Caco-2 (cell line): ENCODE measurements at regions of chr21 and their contacts with region 1.

Region 1: GRCh38 chr21:42009831-42010523 is at the start of gene ZBTB21:
- DNase-seq: peak; percentile 98 to 99
- H3K4me3 ChIP-seq: peak within 1 kb of the TSS; percentile 80
- H3K4me3 Mint-ChIP-seq: peak within 1 kb of the TSS; percentile 85
- H3K27ac Mint-ChIP-seq: peak within 1 kb of the TSS; percentile 98
- H3K4me1 ChIP-seq: peaks cover 4% of the 10 kb centered on the region; the same call in 1 of the 2 replicates
- H3K4me1 Mint-ChIP-seq: peaks cover 19% of the 10 kb centered on the region
- H3K27me3 ChIP-seq: no peaks in the 10 kb centered on the region
- H3K27me3 Mint-ChIP-seq: no peaks in the 10 kb centered on the region
- CTCF ChIP-seq: no peak
- total RNA-seq, gene ZBTB21: 21.4 and 23.3 TPM in 2 replicates

Region 2: GRCh38 chr21:41816220-41817165 is 193.5 kb before region 1 on chr21:
- CTCF ChIA-PET with region 1: no interaction called
- POLR2A ChIA-PET with region 1: interaction called, 19 read pairs
- intact Hi-C with region 1: no loop called
- DNase-seq: peak; percentile 51 to 64
- H3K4me3 ChIP-seq: no peak overlapping the region
- H3K4me3 Mint-ChIP-seq: no peak overlapping the region
- H3K27ac Mint-ChIP-seq: peak overlapping the region; percentile 42
- H3K4me1 ChIP-seq: 0 out of 2 replicates have a peak, but pooled peaks cover 3% of the 10 kb centered on the region
- H3K4me1 Mint-ChIP-seq: no peaks in the 10 kb centered on the region
- H3K27me3 ChIP-seq: no peaks in the 10 kb centered on the region
- H3K27me3 Mint-ChIP-seq: no peaks in the 10 kb centered on the region
- CTCF ChIP-seq: peak; percentile 73

Region 3: GRCh38 chr21:41879190-41879998 is 130.6 kb before region 1 on chr21 and contains the start of gene PRDM15:
- CTCF ChIA-PET with region 1: no interaction called
- POLR2A ChIA-PET with region 1: no interaction called
- intact Hi-C with region 1: loop called (anchors 5 kb)
- DNase-seq: peak; percentile 86 to 87
- H3K4me3 ChIP-seq: peak within 1 kb of the TSS; percentile 84
- H3K4me3 Mint-ChIP-seq: peak within 1 kb of the TSS; percentile 83
- H3K27ac Mint-ChIP-seq: peak within 1 kb of the TSS; percentile 88
- H3K4me1 ChIP-seq: peaks cover 9% of the 10 kb centered on the region; the same call in 1 of the 2 replicates
- H3K4me1 Mint-ChIP-seq: no peaks in the 10 kb centered on the region
- H3K27me3 ChIP-seq: no peaks in the 10 kb centered on the region
- H3K27me3 Mint-ChIP-seq: no peaks in the 10 kb centered on the region
- CTCF ChIP-seq: no peak
- total RNA-seq, gene PRDM15: 5.6 and 8.2 TPM in 2 replicates

Region 4: DNA sequence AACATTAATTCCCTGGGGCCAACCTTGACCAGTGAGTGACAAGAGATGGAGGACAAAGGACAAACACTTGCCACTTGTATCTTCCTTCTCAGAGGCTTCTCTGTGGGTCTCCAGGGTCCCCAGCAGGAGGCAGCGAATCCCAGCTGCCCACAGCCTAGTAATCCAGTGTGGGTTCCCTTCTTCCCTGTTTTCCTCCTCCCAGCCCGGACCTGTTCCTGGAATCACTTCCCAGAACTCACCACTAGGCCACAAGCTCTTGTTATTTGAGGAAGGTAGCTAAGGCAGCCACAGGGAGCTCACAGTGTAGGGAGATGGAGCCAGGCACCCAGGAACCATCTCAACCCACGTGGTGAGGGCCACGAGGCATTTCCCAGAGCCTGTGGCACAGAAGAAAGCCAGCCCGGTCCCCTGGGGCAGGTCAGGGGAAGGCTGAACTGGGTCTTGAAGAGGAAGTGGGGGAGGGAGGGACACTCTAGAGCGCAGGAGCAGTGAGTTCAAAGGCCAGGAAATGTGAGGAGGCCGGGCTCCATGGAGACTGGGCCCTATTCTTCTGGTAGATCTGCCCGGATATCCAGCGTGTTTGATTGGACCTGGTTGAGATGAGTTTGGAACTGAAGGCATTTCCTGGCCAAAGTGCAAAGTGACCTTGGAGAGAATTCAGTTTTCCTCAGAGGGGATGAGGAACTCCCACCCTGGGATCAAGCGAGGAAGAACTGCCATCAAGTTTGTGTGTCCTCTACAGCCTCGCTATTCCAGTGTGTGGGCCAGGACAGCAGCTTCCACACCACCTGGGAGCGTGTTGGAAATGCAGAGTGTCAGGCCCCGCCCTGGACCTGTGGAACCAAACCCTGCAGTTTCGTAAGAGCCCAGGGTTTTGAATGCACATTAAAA is 35.9 kb before region 1 on chr21:
- CTCF ChIA-PET with region 1: no interaction called
- POLR2A ChIA-PET with region 1: no interaction called
- intact Hi-C with region 1: no loop called
- DNase-seq: no peak
- H3K4me3 ChIP-seq: no peak overlapping the region
- H3K4me3 Mint-ChIP-seq: no peak overlapping the region
- H3K27ac Mint-ChIP-seq: no peak overlapping the region
- H3K4me1 ChIP-seq: no peaks in the 10 kb centered on the region
- H3K4me1 Mint-ChIP-seq: no peaks in the 10 kb centered on the region
- H3K27me3 ChIP-seq: no peaks in the 10 kb centered on the region
- H3K27me3 Mint-ChIP-seq: no peaks in the 10 kb centered on the region
- CTCF ChIP-seq: no peak

Region 5: DNA sequence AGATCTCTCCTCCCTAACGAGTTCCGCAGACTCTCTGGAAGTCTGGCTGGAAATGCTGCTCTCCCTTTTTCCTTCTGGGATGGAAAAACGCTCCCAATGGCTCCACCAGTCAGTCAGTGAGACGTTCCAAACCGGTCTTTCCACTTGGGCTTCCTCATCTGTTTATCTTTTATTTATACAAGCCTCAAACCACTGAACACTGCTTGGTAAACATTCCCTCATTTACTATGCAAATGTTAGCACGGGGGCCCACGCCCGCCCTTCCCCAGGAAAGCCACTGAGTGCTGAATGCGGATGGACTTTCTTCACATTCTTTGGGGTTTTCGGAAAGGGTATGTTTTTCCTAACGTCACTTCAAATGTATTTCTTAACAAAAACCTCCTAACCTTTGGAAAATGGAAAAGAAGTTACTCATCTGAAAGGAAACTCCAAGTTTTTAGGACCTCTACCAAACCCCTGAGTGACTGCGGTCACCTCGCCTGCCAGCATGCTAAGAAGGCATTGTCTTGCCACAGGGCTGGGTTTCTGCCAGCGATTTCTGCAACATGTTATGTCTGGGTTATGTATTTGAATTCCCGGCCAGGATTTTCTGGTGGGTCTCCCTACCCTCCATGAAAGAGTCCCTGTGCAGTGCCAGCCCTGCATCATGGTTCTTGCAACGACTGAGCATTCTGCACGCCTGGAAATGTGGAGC is 47.2 kb after region 1 on chr21:
- CTCF ChIA-PET with region 1: interaction called, 3 read pairs
- POLR2A ChIA-PET with region 1: no interaction called
- intact Hi-C with region 1: loop called (anchors 2 kb)
- DNase-seq: peak; percentile 84 to 86
- H3K4me3 ChIP-seq: peak overlapping the region; percentile 30
- H3K4me3 Mint-ChIP-seq: peak overlapping the region; percentile 70
- H3K27ac Mint-ChIP-seq: peak overlapping the region; percentile 85
- H3K4me1 ChIP-seq: peaks cover 52% of the 10 kb centered on the region
- H3K4me1 Mint-ChIP-seq: peaks cover 27% of the 10 kb centered on the region
- H3K27me3 ChIP-seq: no peaks in the 10 kb centered on the region
- H3K27me3 Mint-ChIP-seq: no peaks in the 10 kb centered on the region
- CTCF ChIP-seq: no peak

Region 6: DNA sequence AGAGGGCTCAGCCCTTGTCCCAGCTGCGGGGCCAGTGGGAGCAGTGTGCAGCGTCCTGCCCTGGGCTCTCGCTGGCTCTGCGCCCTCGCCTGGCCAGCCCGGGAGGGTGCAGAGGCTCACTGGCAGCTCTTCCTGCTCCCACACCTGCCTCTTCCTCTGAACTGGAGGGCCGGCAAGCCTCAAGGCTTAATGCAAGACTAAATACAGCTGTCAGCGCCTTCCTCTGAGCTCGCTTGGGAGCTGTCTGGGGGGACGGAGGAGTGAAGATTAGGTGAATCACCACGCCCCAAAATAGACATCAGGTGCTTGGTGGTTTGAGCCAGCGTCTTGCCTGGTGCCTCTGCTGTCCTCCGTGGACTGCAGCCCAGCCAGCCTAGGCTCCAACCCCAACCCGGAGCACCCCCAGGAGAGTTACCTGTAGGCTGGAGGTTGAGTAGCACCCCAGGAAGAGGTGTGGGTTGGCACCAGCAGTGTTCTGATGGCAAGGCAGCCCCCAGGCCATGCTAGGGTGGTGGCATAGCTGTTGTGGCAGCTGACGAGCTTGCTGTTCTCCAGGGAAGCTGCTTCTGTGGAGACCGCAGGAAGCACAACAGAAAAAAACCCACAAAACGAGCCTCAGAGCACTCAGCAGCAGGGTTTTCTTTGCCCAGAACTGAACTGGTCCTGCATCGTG is 98.0 kb after region 1 on chr21:
- CTCF ChIA-PET with region 1: interaction called, 9 read pairs
- POLR2A ChIA-PET with region 1: no interaction called
- intact Hi-C with region 1: loop called (anchors 1 kb)
- DNase-seq: peak; percentile 74 to 77
- H3K4me3 ChIP-seq: no peak overlapping the region
- H3K4me3 Mint-ChIP-seq: no peak overlapping the region
- H3K27ac Mint-ChIP-seq: no peak overlapping the region
- H3K4me1 ChIP-seq: peaks cover 52% of the 10 kb centered on the region
- H3K4me1 Mint-ChIP-seq: peaks cover 25% of the 10 kb centered on the region
- H3K27me3 ChIP-seq: no peaks in the 10 kb centered on the region
- H3K27me3 Mint-ChIP-seq: no peaks in the 10 kb centered on the region
- CTCF ChIP-seq: peak; percentile 65 to 90

Region 7: DNA sequence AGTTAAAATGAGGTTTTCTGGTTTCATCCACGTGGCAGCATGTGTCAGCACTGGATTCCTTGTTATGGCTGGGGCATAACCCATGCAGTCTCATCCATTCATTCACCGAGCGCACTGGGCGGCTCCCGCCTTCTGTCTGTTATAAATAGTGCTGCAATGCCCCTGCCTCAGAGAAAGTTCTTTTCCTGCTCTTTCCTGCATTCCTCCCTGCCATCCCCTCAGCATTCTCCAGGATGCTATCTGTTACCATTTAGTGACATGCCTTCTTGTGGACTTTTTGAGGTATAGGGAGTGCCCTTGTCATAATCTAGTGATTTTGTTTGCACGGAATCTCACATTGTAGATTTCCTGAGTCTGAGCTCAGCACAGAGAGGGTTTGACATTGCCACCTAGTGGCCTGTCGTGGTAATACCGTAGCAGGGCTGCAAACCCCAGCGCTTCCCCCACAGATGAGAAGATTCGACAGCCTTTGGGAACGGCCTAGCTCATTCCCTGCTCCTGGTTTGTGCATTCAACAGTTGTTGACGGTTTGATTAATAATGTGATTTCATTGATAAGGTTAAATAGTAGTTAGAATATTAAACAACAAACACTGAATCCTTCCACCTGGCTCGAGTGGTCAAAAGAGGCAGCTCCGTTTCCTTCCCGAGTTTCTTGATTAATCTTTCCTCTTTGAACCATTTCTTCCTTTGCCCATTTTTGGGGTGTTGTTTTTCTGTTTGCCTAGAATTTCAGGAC is 107.4 kb after region 1 on chr21:
- CTCF ChIA-PET with region 1: interaction called, 12 read pairs
- POLR2A ChIA-PET with region 1: no interaction called
- intact Hi-C with region 1: loop called (anchors 1 kb)
- DNase-seq: peak; percentile 66 to 79
- H3K4me3 ChIP-seq: no peak overlapping the region
- H3K4me3 Mint-ChIP-seq: no peak overlapping the region
- H3K27ac Mint-ChIP-seq: no peak overlapping the region
- H3K4me1 ChIP-seq: peaks cover 20% of the 10 kb centered on the region
- H3K4me1 Mint-ChIP-seq: peaks cover 20% of the 10 kb centered on the region
- H3K27me3 ChIP-seq: no peaks in the 10 kb centered on the region
- H3K27me3 Mint-ChIP-seq: no peaks in the 10 kb centered on the region
- CTCF ChIP-seq: peak; percentile 87 to 89